Panc1 (cell line): ENCODE measurements at regions of chr17 and their contacts with region 1.

Region 1: DNA sequence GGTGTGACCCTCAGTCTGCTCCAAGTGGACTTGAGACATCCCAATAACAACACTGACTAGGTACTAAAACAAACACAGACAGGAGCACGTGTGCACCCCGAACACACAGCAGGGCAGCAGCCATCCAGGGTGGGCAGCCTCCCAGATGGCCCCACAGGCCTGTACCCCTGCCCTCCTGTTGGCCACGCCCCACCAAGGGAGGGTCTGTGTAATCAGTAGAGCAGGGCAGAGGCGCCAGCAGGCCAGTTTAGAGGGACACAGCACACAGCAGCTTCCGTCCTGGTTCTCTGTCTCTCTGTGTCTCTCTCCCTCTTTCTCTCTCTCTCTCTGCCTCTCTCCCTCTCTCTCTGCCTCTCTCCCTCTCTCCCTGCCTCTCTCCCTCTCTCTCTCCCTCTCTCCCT is 21.4 kb downstream of the ACTG1 start:
- DNase-seq: no peak
- ATAC-seq: peak; percentile 21; the same call in 1 of the 2 replicates
- H3K4me3 ChIP-seq: no peak overlapping the region
- H3K27ac ChIP-seq: peak overlapping the region; percentile 18; the same call in 1 of the 2 replicates
- H3K4me1 ChIP-seq: peaks cover 31% of the 10 kb centered on the region
- H3K27me3 ChIP-seq: no peaks in the 10 kb centered on the region
- CTCF ChIP-seq: no peak

Region 2: GRCh38 chr17:81508639-81509206 is 17.5 kb after region 1 on chr17:
- CTCF ChIA-PET with region 1: interaction called, 3 read pairs
- POLR2A ChIA-PET with region 1: interaction called, 14 read pairs
- in situ Hi-C with region 1: no loop called
- intact Hi-C with region 1: no loop called
- DNase-seq: no peak
- ATAC-seq: peak; percentile 7; the same call in 1 of the 2 replicates
- H3K4me3 ChIP-seq: peak overlapping the region; percentile 67 to 100
- H3K27ac ChIP-seq: peak overlapping the region; percentile 87
- H3K4me1 ChIP-seq: peaks cover 13% of the 10 kb centered on the region
- H3K27me3 ChIP-seq: no peaks in the 10 kb centered on the region
- CTCF ChIP-seq: no peak